Dorsolateral prefrontal cortex (tissue), 120 donors: ENCODE measurements at regions of chr4 and their contacts with region 1.

Region 1: DNA sequence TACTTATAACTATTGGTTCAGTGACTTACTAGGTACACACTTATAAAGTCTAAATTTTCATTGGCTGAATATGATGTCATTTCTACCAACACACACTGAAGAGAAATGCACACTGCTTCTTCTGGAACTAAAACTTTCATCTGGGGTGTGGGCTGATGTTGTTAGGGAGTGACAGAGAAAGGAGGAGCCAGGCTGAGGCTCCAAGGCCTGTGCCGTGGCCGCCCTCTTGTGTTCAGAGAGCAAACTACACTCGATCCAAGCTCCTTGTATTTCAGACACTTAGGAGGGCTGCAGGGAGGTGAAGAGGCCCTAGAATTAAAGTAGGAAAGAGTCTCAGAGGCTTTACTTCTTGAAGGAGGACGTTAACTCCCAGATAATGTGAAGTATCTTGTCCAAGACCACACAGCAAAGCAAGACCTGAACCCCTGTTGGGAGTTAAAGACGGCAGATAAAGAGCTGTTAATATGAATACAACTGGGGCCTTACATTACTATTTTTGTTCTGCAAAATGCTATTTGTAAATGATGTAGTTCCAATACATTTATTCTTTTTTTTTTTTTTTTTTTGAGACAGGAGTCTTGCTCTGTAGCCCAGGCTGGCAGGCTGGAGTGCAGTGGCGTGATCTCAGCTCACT is 137.5 kb downstream of the AFAP1 start:
- DNase-seq: peak; percentile 77 to 94 (median 84)
- H3K4me3 ChIP-seq: no peak overlapping the region
- H3K27ac ChIP-seq: peak overlapping the region in 1 of 59 donors; percentile 3
- H3K27me3 ChIP-seq: no peaks in the 10 kb centered on the region
- CTCF ChIP-seq: peak; percentile 51 to 97 (median 93)

Region 2: DNA sequence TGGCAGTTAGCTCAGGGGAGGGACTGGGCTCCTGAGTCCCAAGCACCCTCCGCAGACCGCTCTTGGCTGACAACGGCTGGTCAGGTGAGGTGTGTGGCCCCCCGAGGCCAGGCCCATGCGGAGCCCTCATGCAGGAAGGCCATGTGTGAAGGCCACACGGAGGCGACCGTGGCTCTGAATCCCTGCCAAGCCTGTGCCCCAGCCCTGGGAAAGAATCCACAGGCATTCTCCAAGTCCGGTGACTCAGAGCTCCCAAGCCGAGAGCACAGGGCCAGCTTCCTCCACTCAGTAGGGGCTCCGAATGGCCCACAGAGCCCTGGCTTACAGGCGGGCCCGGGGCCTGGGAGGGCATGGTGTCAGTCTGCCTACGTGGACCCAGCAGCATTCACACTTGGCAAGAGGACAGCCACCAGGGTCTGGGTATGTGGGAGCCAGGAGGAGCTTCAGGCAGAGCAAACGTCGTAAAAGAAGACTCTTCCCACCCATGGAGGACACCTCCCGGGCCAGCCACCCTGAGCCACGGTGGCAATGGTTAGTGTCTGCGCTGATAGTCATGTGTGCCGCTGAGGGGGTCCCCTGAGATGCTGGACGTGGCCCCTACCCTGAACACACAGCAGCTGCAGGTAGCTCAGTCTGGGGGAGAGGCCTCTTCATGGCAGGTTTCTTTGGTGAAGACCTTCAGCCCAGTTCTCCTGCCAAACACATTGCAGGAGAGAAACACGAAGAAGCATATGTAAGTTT is 473.1 kb before region 1 on chr4:
- intact Hi-C with region 1: loop called in 1 of 2 experiments (anchors 10 kb)
- DNase-seq: peak in 7 of 10 donors; percentile 46 to 81 (median 61)
- H3K4me3 ChIP-seq: no peak overlapping the region
- H3K27ac ChIP-seq: peak overlapping the region in 27 of 59 donors; percentile 6 to 94 (median 53)
- H3K27me3 ChIP-seq: no peaks in the 10 kb centered on the region
- CTCF ChIP-seq: peak in 8 of 56 donors; percentile 5 to 30 (median 22)

Region 3: DNA sequence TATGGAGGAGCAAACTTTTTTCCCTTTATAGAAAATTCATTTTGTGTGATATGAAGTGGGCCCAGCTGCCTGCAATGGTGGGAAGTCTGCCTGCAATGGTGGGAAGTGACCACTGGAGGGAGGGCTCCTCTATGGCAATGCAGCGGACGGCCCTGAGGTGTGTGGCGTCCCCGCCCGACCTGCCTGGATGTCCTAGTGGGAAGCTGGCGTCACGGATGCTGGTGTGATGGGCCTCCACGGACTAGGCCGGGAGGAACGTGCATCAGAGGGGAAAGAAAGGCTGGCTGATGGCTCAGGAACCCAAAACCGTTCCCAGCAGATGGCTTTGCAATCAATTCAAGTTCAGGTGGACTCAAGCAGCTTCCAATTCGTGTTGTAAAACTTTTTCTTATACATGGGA is 40.5 kb before region 1 on chr4:
- intact Hi-C with region 1: loop called (anchors 2 to 5 kb)
- DNase-seq: peak; percentile 53 to 87 (median 80)
- H3K4me3 ChIP-seq: no peak overlapping the region
- H3K27ac ChIP-seq: no peak overlapping the region
- H3K27me3 ChIP-seq: no peaks in the 10 kb centered on the region
- CTCF ChIP-seq: peak; percentile 50 to 94 (median 84)

Region 4: DNA sequence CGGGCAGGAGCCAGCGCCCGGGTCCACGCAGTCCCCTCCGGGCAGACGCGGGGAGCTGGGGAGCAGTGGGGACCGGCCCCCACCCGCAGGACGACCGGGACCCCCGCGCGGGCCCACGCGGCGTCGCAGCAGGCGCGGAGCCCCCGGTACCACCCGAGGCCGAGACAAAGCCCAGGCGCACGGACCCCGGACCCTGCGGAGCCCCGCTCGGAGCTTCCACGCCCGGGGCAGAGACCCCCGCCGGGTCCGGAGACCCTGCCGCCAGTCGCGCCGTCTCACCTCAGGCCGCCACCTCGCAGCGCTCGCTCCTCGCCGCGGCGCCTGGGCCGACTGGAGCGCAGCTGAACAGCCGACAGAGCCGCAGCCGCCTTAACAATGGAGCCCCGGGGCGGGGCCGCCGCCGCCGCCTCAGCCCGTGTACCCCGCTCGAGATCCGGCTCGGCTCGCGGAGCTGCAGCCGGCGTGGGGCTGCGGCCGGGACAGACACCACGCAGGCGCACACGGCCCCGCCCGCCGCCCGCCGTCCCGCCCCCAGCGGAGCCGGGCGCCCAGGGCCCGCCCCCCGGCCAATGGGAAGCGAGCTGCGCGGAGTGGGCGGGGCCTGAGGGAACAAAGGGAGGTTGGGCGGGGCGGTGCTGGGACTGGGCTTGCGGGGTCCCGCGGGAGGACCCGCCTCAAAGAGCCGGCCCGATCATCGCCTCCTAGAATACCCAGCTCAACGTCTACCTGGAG is 137.3 kb after region 1 on chr4 and contains the start of gene AFAP1:
- intact Hi-C with region 1: loop called in 1 of 2 experiments (anchors 5 kb)
- DNase-seq: peak; percentile 70 to 94 (median 86)
- H3K4me3 ChIP-seq: peak within 1 kb of the TSS; percentile 59 to 97 (median 81)
- H3K27ac ChIP-seq: peak within 1 kb of the TSS in 45 of 59 donors; percentile 8 to 86 (median 63)
- H3K27me3 ChIP-seq: no peaks in the 10 kb centered on the region
- CTCF ChIP-seq: peak in 7 of 56 donors; percentile 5 to 32 (median 17)
- total RNA-seq, gene AFAP1: 16.0 to 44.2 (median 28.5) TPM

Region 5: DNA sequence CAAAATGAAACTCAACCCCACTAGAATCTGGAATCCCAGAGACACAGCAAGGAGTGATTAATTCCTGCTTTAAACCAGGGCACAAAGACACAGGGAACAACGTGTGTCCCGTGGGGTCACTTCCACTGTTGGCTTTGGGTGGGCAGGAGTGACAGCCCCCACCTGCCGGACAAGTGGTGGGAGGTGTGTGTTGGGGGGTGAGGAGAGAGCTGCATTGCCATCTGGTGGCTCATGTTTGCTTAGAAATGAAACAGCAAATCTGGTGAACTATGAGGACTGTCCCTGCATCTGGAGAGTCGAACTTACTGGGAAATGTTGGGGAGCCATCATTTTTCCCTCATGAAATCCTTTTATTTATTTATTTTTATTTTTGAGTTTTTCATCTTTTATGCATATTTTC is 213.3 kb after region 1 on chr4:
- intact Hi-C with region 1: loop called in 1 of 2 experiments (anchors 10 kb)
- DNase-seq: peak in 2 of 10 donors; percentile 40 to 49
- H3K4me3 ChIP-seq: peak overlapping the region in 23 of 59 donors; percentile 0 to 46 (median 25)
- H3K27ac ChIP-seq: peak overlapping the region in 6 of 59 donors; percentile 12 to 62 (median 32)
- H3K27me3 ChIP-seq: no peaks in the 10 kb centered on the region
- CTCF ChIP-seq: peak in 55 of 56 donors; percentile 11 to 71 (median 50)